ENCODE measurements at regions of chr1 and their contacts with region 1.

Region 1: GRCh38 chr1:231337472-231338269 is at the start of gene EXOC8:
- DNase-seq: peak; percentile 97
- ATAC-seq: peak; percentile 85
- H3K4me3 Mint-ChIP-seq: peak within 1 kb of the TSS; percentile 97
- H3K27ac Mint-ChIP-seq: peak within 1 kb of the TSS; percentile 98
- H3K4me1 Mint-ChIP-seq: peaks cover 60% of the 10 kb centered on the region
- H3K27me3 Mint-ChIP-seq: peaks cover 3% of the 10 kb centered on the region
- total RNA-seq, gene EXOC8: 18.8 to 19.3 TPM

Region 2: GRCh38 chr1:231157311-231157710 is 180.4 kb before region 1 on chr1:
- CTCF ChIA-PET with region 1: no interaction called
- DNase-seq: no peak
- ATAC-seq: no peak
- H3K4me3 Mint-ChIP-seq: no peak overlapping the region
- H3K27ac Mint-ChIP-seq: no peak overlapping the region
- H3K4me1 Mint-ChIP-seq: peaks cover 2% of the 10 kb centered on the region
- H3K27me3 Mint-ChIP-seq: peaks cover 75% of the 10 kb centered on the region

Region 3: GRCh38 chr1:231315887-231316286 is 21.8 kb before region 1 on chr1:
- CTCF ChIA-PET with region 1: interaction called, 18 read pairs
- DNase-seq: peak; percentile 57
- ATAC-seq: peak; percentile 86
- H3K4me3 Mint-ChIP-seq: no peak overlapping the region
- H3K27ac Mint-ChIP-seq: no peak overlapping the region
- H3K4me1 Mint-ChIP-seq: no peaks in the 10 kb centered on the region
- H3K27me3 Mint-ChIP-seq: no peaks in the 10 kb centered on the region

Region 4: DNA sequence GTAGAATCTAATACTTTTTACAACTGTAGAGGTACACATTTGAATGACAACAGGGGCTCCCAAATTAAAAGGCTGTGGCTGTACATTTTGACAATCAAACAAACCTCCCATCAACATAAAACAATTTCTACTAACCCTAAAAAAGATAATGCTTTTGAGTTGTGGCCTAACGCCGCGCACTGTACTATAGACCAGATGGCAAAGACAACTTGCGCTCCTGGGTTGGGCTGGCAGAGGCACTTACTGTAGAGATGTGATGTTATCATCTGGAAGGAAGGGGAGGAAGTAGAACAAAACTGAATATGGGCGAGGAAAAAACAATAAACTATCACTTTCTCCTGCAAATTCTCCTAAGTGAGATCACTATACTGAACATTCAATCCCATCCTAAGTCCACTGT is 26.5 kb after region 1 on chr1:
- CTCF ChIA-PET with region 1: interaction called, 11 read pairs
- DNase-seq: no peak
- ATAC-seq: no peak
- H3K4me3 Mint-ChIP-seq: no peak overlapping the region
- H3K27ac Mint-ChIP-seq: no peak overlapping the region
- H3K4me1 Mint-ChIP-seq: no peaks in the 10 kb centered on the region
- H3K27me3 Mint-ChIP-seq: no peaks in the 10 kb centered on the region

Measured in activated CD8-positive, alpha-beta memory T cell treated with anti-CD3 and anti-CD28 coated beads, Interleukin-2, amount 10 ng/mL, durations not matched to agents 7 days and 5 days (primary cell).